H1 (cell line): ENCODE measurements at regions of chr17 and their contacts with region 1.

Region 1: DNA sequence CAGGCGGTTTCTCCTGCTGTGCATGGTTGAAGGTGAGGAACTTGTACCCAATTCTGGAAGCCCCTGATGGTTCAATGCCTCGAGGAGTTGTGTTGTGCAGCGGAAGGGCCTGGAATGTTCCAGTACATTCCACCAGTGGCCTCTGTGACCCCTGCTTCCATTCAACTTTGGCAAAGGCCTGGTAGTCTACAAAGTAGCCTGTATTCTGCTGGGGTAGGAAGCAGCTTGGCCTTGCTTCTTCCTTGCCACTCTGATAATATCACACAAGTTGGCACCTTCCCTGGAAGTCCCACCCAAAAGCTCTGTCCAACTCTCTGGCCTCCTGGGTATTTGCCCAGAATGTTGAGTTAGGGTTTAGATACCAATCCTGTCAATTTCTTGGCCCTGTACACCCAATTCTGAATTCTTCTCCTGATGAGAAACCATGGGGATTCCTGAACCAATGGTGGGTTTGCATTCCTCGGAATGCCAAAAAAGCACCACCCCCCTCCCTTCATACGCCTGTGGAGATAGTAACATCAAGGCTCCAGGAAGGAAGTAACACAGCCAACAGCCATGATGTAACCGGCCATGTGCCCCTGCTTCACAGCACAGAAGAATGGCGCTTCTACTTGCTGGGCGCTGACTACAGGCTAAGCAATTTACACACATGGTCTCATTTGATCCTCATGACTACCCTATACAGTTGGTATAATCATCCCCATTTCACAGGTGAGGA is 11.8 kb upstream of the FAM117A start:
- DNase-seq: no peak
- H3K4me3 ChIP-seq: no peak overlapping the region
- H3K27ac ChIP-seq: no peak overlapping the region
- H3K4me1 ChIP-seq: peaks cover 0 to 3% (median 0%) of the 10 kb centered on the region in 4 experiments; a peak in 2 of 7 replicates
- H3K27me3 ChIP-seq: no peaks in the 10 kb centered on the region
- CTCF ChIP-seq: no peak
- EP300 ChIP-seq: no peak
- POLR2A ChIP-seq: no peak
- RAD21 ChIP-seq: no peak

Region 2: DNA sequence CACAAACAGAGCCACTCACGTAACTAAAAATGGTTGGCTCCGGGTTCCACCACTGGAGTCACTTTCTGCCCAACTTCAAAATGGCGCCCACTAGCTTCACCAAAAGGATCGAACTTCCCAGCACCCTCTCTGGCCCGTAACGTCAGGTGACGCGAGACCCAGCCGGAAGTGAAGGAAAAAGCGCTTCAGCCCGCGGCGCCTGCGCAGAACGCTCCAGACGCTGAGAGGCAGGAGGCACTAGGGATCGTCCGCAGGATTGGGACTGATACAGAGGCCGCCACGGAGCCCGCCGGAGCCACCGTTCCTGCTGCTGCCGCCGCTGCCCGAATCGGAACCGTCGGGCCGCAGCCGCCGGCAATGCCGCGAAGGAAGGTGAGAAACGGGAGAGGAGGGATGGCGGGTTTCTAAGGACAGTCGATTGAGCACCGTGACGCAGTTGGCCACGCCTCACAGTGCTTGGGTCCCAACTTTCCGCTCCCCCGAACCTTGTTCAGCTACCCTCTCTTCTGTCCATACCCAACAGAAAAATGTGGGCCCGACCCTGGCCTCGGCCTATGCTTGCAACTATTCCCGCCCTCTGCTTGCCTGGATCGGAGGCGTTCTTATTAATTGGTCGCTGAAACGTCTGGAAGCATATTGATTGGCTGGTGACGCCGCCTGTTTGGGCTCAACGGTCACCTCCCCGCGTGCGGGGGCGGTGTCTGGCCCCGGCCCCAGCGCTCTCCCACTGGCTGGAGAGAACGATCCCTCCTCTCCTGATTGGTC is 13.0 kb after region 1 on chr17 and contains the start of gene KAT7:
- CTCF ChIA-PET with region 1: interaction called, 4 read pairs
- POLR2A ChIA-PET with region 1: interaction called, 23 read pairs
- DNase-seq: peak; percentile 97
- H3K4me3 ChIP-seq: peak within 1 kb of the TSS; percentile 96 to 100 (median 99)
- H3K27ac ChIP-seq: peak within 1 kb of the TSS; percentile 99
- H3K4me1 ChIP-seq: peaks cover 0 to 10% (median 1%) of the 10 kb centered on the region in 4 experiments; a peak in 3 of 7 replicates
- H3K27me3 ChIP-seq: peaks cover 0 to 3% (median 0%) of the 10 kb centered on the region in 4 experiments; a peak in 2 of 7 replicates
- CTCF ChIP-seq: no peak
- EP300 ChIP-seq: no peak
- POLR2A ChIP-seq: peak; percentile 95 to 97
- RAD21 ChIP-seq: no peak
- total RNA-seq, gene KAT7: 138 and 139 TPM in 2 replicates